ENCODE measurements at regions of chr1 and their contacts with region 1.

Region 1: DNA sequence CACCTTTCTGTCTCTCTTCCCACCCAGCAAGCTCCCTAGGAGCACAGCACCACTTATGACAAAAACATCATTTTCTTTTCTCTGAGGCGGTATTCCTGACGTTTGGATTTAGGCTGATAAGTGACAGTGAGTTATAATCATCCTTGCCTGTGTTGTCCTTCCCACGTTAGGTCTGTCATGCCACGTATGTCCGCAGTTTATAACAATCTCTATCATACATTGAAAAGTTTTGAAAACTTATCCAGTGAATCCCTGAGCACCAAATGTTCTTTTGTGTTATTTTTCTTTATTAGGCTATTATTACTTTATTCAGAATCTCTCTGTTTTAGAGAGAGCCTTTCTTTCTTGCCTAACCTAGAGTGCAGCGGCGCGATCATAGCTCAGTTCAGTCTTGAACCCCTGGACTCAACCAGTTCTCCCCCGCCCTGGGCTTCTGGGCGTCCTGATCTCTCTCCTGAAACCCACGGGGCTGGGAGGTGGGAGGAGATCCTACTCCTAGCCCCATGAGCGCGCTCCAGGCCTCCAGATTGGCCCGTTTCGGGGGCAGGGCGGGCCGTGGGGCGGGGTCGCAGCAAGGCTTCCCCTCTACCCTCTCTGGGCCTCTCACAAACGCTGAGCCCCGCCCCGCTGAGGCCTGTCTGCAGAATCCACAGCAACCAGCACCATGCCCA is at the start of gene GSTM2:
- DNase-seq: peak; percentile 85
- H3K4me3 ChIP-seq: peak within 1 kb of the TSS; percentile 13 to 33 (median 15)
- H3K27ac ChIP-seq: no peak within 1 kb of the TSS
- H3K4me1 ChIP-seq: peaks cover 5% of the 10 kb centered on the region
- H3K27me3 ChIP-seq: no peaks in the 10 kb centered on the region
- CTCF ChIP-seq: no peak
- POLR2A ChIP-seq: no peak
- total RNA-seq, gene GSTM2: 12.0 and 21.5 TPM in 2 replicates

Region 2: DNA sequence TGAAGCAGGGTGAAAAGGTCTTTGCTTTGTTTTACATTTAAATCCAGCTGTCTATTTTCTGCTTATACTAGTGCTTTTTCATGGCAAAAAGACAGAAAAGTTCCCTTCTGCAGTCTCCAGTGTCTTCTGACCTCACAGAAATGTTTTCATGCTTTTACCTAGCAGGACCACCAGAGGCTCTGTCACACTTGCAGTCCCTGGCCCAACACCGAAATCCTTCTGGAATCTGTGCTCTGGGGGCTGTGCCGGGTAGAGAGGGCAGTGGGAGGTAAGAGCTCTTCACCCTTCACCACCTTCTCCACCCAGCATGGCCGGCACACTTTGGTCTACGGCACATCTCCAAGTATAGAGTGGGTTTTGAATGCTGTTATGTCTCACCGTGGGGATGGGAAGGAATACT is 68.9 kb before region 1 on chr1:
- CTCF ChIA-PET with region 1: no interaction called
- POLR2A ChIA-PET with region 1: no interaction called
- dilution Hi-C with region 1: no loop called
- intact Hi-C with region 1: no loop called
- DNase-seq: no peak
- H3K4me3 ChIP-seq: no peak overlapping the region
- H3K27ac ChIP-seq: no peak overlapping the region
- H3K4me1 ChIP-seq: peaks cover 15% of the 10 kb centered on the region
- H3K27me3 ChIP-seq: no peaks in the 10 kb centered on the region
- CTCF ChIP-seq: peak in 1 of 2 donors; percentile 20
- POLR2A ChIP-seq: no peak

Region 3: GRCh38 chr1:109704173-109704572 is 36.6 kb after region 1 on chr1:
- CTCF ChIA-PET with region 1: no interaction called
- POLR2A ChIA-PET with region 1: no interaction called
- dilution Hi-C with region 1: no loop called
- intact Hi-C with region 1: loop called (anchors 1 kb)
- DNase-seq: peak; percentile 0
- H3K4me3 ChIP-seq: no peak overlapping the region
- H3K27ac ChIP-seq: no peak overlapping the region
- H3K4me1 ChIP-seq: no peaks in the 10 kb centered on the region
- H3K27me3 ChIP-seq: peaks cover 0 to 4% of the 10 kb centered on the region in 2 experiments
- CTCF ChIP-seq: no peak
- POLR2A ChIP-seq: no peak

Region 4: GRCh38 chr1:109751531-109752260 is 84.1 kb after region 1 on chr1:
- CTCF ChIA-PET with region 1: no interaction called
- POLR2A ChIA-PET with region 1: no interaction called
- dilution Hi-C with region 1: no loop called
- intact Hi-C with region 1: no loop called
- DNase-seq: no peak
- H3K4me3 ChIP-seq: no peak overlapping the region
- H3K27ac ChIP-seq: no peak overlapping the region
- H3K4me1 ChIP-seq: no peaks in the 10 kb centered on the region
- H3K27me3 ChIP-seq: peaks cover 14 to 22% of the 10 kb centered on the region in 2 experiments
- CTCF ChIP-seq: no peak
- POLR2A ChIP-seq: no peak

Region 5: GRCh38 chr1:109762821-109763645 is 95.4 kb after region 1 on chr1:
- CTCF ChIA-PET with region 1: no interaction called
- POLR2A ChIA-PET with region 1: no interaction called
- dilution Hi-C with region 1: no loop called
- intact Hi-C with region 1: loop called (anchors 5 kb)
- DNase-seq: peak; percentile 88
- H3K4me3 ChIP-seq: no peak overlapping the region
- H3K27ac ChIP-seq: peak overlapping the region; percentile 90
- H3K4me1 ChIP-seq: peaks cover 14% of the 10 kb centered on the region
- H3K27me3 ChIP-seq: no peaks in the 10 kb centered on the region
- CTCF ChIP-seq: no peak
- POLR2A ChIP-seq: peak; percentile 24

Measured in endothelial cell of umbilical vein (primary cell).